ENCODE measurements at regions of chr20 and their contacts with region 1.

Region 1: DNA sequence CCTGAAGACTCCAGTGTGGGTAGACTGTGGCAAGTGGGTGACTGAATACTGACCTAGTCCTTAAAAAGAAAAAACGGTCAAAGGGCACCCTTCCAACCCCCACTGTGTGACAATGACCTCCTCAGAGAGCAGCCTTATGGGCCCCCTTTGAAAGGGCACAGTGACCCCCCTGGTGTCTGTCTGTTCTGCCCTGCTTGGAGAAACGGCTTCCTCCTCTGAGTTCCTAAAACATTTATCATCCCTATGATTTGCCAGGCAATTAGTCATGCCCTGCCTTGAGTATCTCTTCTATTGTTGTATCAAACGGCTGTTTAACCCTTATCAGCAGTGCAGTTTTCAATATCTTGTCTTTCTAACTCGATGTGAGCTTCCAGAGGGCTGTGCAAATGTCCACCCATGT is 21.0 kb upstream of the STX16 start:
- DNase-seq: peak; percentile 42
- H3K4me3 Mint-ChIP-seq: no peak overlapping the region
- H3K27ac Mint-ChIP-seq: peak overlapping the region; percentile 63
- H3K4me1 Mint-ChIP-seq: peaks cover 19% of the 10 kb centered on the region
- H3K27me3 Mint-ChIP-seq: no peaks in the 10 kb centered on the region
- CTCF ChIP-seq: no peak

Region 2: DNA sequence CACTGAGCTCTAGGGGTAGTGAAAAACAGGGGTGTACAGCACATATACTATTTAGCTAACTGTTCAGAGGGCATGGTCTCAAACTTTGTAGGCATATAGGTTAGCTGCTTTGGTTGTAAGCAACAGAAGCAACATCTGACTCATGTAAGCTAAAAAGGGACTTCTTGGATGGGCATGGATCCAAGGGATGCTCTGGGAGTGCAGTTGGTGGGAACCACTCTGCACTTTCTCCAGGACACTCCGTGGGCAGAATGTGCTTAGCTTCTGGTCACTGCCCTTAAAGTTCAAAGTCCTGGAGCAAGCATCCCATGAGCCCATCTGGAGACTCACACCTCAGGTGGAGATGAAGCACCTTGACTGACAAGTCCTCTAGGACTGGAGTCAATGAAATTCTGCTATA is 126.4 kb before region 1 on chr20:
- CTCF ChIA-PET with region 1: no interaction called
- POLR2A ChIA-PET with region 1: interaction called, 10 read pairs
- intact Hi-C with region 1: no loop called
- DNase-seq: no peak
- H3K4me3 Mint-ChIP-seq: no peak overlapping the region
- H3K27ac Mint-ChIP-seq: no peak overlapping the region
- H3K4me1 Mint-ChIP-seq: no peaks in the 10 kb centered on the region
- H3K27me3 Mint-ChIP-seq: peaks cover 16% of the 10 kb centered on the region
- CTCF ChIP-seq: no peak

Region 3: GRCh38 chr20:58542411-58543095 is 87.5 kb before region 1 on chr20:
- CTCF ChIA-PET with region 1: no interaction called
- POLR2A ChIA-PET with region 1: no interaction called
- intact Hi-C with region 1: no loop called
- DNase-seq: peak; percentile 14
- H3K4me3 Mint-ChIP-seq: no peak overlapping the region
- H3K27ac Mint-ChIP-seq: no peak overlapping the region
- H3K4me1 Mint-ChIP-seq: no peaks in the 10 kb centered on the region
- H3K27me3 Mint-ChIP-seq: no peaks in the 10 kb centered on the region
- CTCF ChIP-seq: no peak

Measured in MCF 10A (cell line).